HEK293 (cell line): ENCODE measurements at regions of chr2 and their contacts with region 1.

Region 1: DNA sequence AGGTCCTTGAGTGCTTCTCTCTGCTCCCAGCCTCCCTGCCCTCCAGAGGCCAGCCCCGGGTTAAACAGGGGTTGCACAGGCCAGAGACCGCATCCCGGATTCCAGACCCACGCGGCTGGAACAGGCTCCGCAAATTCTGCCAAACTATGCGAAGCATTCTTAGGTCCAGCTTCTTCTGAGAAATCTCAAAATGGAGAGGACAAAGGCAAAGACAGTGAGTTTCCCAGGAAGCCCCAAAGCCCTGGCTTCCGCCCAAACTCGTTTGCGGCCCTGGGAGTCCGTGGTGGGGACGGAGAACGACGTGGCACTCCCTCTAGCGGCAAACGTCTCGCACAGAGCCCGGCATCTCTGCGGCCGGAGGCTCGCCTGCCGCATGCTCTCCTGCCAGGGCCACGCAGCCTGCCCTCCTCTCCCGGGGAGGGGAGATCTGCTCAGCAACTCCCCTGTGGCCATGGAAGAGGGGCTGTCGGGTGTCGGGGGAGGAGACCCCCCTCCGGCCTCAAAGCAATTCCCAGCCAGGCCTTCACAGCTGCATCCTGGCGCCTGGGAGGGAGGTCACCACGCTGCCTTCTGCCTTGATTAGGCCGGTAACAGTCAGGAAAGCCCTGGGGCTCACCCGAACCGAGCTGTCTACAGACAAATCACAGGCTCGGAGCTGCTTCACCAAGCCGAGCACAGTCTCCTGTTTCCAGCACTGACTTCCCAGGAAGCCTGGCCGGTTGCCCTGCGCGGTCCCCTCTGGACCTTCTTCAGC is 33.4 kb upstream of the KLHL29 start:
- H3K4me3 ChIP-seq: no peak overlapping the region
- H3K27ac ChIP-seq: no peak overlapping the region
- H3K4me1 ChIP-seq: no peaks in the 10 kb centered on the region
- CTCF ChIP-seq: 0 out of 2 replicates have a peak, but pooled peaks have one; percentile 28

Region 2: DNA sequence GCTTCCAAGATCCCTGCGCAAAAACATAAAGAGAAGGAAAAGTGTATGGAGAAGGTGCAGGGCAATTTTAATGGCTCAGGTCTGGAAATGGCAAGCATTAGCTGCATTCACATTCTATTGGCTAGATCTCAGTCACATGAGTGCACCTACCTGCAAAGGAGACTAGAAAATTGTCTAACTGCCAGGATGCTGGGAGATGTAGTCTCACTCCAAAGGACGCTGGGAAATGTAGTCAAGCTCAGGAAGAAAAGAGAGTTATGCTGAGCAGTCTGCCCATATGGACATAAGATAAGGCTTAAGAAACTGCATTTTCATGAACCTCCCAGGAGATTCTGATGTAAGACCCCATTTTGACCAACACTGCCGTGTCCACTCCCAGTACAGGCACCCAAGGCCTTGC is 23.9 kb after region 1 on chr2:
- CTCF ChIA-PET with region 1: interaction called, 10 read pairs
- POLR2A ChIA-PET with region 1: no interaction called
- H3K4me3 ChIP-seq: no peak overlapping the region
- H3K27ac ChIP-seq: no peak overlapping the region
- H3K4me1 ChIP-seq: 0 out of 2 replicates have a peak, but pooled peaks cover 4% of the 10 kb centered on the region
- CTCF ChIP-seq: no peak

Region 3: DNA sequence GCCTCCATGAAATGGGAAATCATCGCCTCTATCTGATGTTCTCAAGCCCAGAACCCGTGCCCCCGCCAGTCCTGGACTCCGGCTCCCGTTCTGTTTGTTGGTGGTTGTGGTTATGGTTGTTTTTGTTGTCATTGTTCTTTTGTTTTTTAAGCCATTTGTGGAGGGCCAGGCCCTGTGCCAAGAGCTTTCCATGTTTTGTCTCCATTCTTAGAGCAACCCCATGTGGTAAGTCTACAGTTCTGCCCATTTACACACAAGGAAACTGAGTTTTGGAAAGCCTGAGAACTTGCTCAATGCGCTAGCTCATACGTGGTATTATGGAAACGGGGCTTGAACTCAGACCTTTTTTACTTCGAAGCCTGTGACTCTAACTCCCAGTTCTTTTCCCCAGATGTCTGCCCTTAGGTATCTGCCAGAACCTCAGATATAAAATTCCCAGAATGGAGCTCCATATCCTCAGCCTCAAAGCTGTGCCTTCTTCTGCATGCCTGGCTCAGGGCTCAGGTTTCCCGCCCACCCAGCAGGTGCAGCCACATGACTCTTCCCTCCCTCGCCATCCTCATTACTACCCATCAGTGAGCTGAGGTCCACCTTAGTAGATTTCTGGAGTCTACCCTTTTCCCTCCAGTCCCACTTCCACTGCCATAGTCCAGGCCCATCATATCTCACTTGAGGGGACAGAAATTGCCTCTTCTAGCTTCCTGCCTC is 227.6 kb after region 1 on chr2:
- CTCF ChIA-PET with region 1: no interaction called
- POLR2A ChIA-PET with region 1: no interaction called
- H3K4me3 ChIP-seq: no peak overlapping the region
- H3K27ac ChIP-seq: no peak overlapping the region
- H3K4me1 ChIP-seq: no peaks in the 10 kb centered on the region
- CTCF ChIP-seq: no peak